ENCODE measurements at regions of chr11 and their contacts with region 1.

Region 1: GRCh38 chr11:65919146-65920033 is at the start of gene DRAP1:
- DNase-seq: peak; percentile 97
- H3K4me3 ChIP-seq: peak within 1 kb of the TSS; percentile 70 to 90 (median 71)
- H3K27ac ChIP-seq: peak within 1 kb of the TSS; percentile 92
- H3K4me1 ChIP-seq: peaks cover 49% of the 10 kb centered on the region
- H3K27me3 ChIP-seq: no peaks in the 10 kb centered on the region
- CTCF ChIP-seq: no peak
- POLR2A ChIP-seq: peak; percentile 23
- total RNA-seq, gene DRAP1: 114 and 118 TPM in 2 replicates

Region 2: DNA sequence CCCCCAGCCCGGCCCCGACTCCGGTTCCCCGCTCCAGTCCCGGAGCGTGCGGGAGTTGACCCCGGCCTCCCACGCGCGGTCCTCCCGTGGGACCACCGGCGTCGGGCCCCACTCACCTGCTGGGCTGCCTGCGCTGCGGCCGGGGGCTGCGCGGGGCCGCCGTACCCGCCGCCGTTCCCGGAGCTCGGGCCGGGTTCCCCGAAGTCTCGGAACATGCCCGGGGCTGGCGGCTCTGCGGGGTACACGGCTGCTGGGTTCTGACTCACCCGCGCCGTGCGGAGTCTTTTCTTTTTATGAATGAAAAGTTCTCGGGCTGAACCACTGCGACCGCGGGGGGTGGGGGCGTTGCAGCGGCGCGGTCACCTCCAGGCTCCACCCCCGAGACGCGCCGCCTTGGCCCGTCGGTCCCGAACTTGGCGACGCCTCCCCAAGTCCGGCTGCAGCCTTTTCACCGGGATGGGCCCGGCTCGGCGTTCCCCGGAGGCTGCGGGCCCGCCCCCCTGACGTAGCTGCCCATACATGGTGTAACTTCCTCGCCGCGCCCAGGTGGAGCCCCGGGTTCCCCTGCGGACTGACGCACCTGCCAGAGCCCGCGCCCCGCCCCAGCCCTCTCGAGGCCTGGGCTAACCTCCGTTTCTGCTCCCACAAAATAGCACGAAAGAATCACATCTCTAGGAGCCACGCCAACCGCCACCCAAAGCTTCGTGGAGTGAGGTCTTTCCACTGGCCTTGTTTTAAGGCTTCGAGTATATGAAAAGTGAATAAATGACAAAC is 19.1 kb before region 1 on chr11 and contains the start of gene FOSL1:
- CTCF ChIA-PET with region 1: interaction called, 13 read pairs
- POLR2A ChIA-PET with region 1: interaction called, 17 read pairs
- dilution Hi-C with region 1: no loop called
- intact Hi-C with region 1: loop called (anchors 1 kb)
- DNase-seq: peak; percentile 94
- H3K4me3 ChIP-seq: peak within 1 kb of the TSS; percentile 58 to 79 (median 69)
- H3K27ac ChIP-seq: peak within 1 kb of the TSS; percentile 87
- H3K4me1 ChIP-seq: peaks cover 40% of the 10 kb centered on the region
- H3K27me3 ChIP-seq: no peaks in the 10 kb centered on the region
- CTCF ChIP-seq: no peak
- POLR2A ChIP-seq: peak; percentile 99
- total RNA-seq, gene FOSL1: 52.6 and 53.8 TPM in 2 replicates

Region 3: GRCh38 chr11:65961232-65961901 is 42.0 kb after region 1 on chr11 and contains the start of gene SART1:
- CTCF ChIA-PET with region 1: no interaction called
- POLR2A ChIA-PET with region 1: no interaction called
- dilution Hi-C with region 1: no loop called
- intact Hi-C with region 1: loop called (anchors 1 kb)
- DNase-seq: peak; percentile 99
- H3K4me3 ChIP-seq: peak within 1 kb of the TSS; percentile 79 to 98 (median 90)
- H3K27ac ChIP-seq: peak within 1 kb of the TSS; percentile 78
- H3K4me1 ChIP-seq: peaks cover 11% of the 10 kb centered on the region
- H3K27me3 ChIP-seq: no peaks in the 10 kb centered on the region
- CTCF ChIP-seq: no peak
- POLR2A ChIP-seq: peak; percentile 98
- total RNA-seq, gene SART1: 58.9 and 62.7 TPM in 2 replicates

Region 4: GRCh38 chr11:66051766-66052663 is 132.6 kb after region 1 on chr11 and contains the start of gene SF3B2:
- CTCF ChIA-PET with region 1: no interaction called
- POLR2A ChIA-PET with region 1: interaction called, 3 read pairs
- dilution Hi-C with region 1: no loop called
- intact Hi-C with region 1: loop called (anchors 5 kb)
- DNase-seq: peak; percentile 99
- H3K4me3 ChIP-seq: peak within 1 kb of the TSS; percentile 67 to 93 (median 80)
- H3K27ac ChIP-seq: peak within 1 kb of the TSS; percentile 63
- H3K4me1 ChIP-seq: peaks cover 14% of the 10 kb centered on the region
- H3K27me3 ChIP-seq: peaks cover 0 to 1% of the 10 kb centered on the region in 2 experiments
- CTCF ChIP-seq: no peak
- POLR2A ChIP-seq: peak; percentile 88
- total RNA-seq, gene SF3B2: 179 and 196 TPM in 2 replicates

Region 5: GRCh38 chr11:66768088-66768521 is 848.7 kb after region 1 on chr11:
- CTCF ChIA-PET with region 1: no interaction called
- POLR2A ChIA-PET with region 1: no interaction called
- dilution Hi-C with region 1: no loop called
- intact Hi-C with region 1: no loop called
- DNase-seq: no peak
- H3K4me3 ChIP-seq: no peak overlapping the region
- H3K27ac ChIP-seq: no peak overlapping the region
- H3K4me1 ChIP-seq: no peaks in the 10 kb centered on the region
- H3K27me3 ChIP-seq: no peaks in the 10 kb centered on the region
- CTCF ChIP-seq: no peak
- POLR2A ChIP-seq: no peak